Gastrocnemius medialis (tissue), 4 donors: ENCODE measurements at regions of chr6 and their contacts with region 1.

Region 1: GRCh38 chr6:18122124-18123093 is at the start of gene NHLRC1:
- DNase-seq: peak; percentile 85 to 90
- ATAC-seq: peak; percentile 97 to 98
- H3K4me3 ChIP-seq: peak within 1 kb of the TSS; percentile 62 to 97 (median 68)
- H3K27ac ChIP-seq: peak within 1 kb of the TSS; percentile 79 to 89 (median 86)
- H3K4me1 ChIP-seq: peaks cover 12 to 20% of the 10 kb centered on the region in 2 donors
- H3K27me3 ChIP-seq: no peaks in the 10 kb centered on the region
- CTCF ChIP-seq: peak; percentile 97 to 99 (median 98)
- POLR2A ChIP-seq: peak; percentile 68
- total RNA-seq, gene NHLRC1: 0.56 to 1.9 (median 1.4) TPM

Region 2: DNA sequence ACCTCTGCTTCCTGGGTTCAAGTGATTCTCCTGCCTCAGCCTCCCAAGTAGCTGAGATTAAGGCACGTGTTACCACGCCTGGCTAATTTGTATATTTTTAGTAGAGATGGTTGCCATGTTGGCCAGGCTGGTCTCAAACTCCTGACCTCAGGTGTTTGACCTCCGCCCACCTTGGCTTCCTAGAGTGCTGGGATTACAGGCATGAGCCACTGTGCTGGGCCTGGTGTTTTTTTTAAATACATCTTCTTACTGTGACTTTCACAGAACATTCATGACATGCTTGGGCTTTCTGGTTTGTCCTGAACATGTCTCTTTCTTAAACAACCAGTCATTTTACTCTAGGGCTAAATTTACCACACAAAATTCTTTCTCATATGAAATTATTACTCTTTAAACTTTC is 557.0 kb before region 1 on chr6:
- in situ Hi-C with region 1: no loop called
- intact Hi-C with region 1: no loop called
- DNase-seq: no peak
- ATAC-seq: no peak
- H3K4me3 ChIP-seq: no peak overlapping the region
- H3K27ac ChIP-seq: no peak overlapping the region
- H3K4me1 ChIP-seq: no peaks in the 10 kb centered on the region
- H3K27me3 ChIP-seq: no peaks in the 10 kb centered on the region
- CTCF ChIP-seq: no peak
- POLR2A ChIP-seq: no peak

Region 3: GRCh38 chr6:17584241-17584803 is 538.1 kb before region 1 on chr6:
- in situ Hi-C with region 1: no loop called
- intact Hi-C with region 1: loop called (anchors 5 kb)
- DNase-seq: peak in 1 of 2 donors; percentile 33
- ATAC-seq: peak; percentile 92 to 93
- H3K4me3 ChIP-seq: peak overlapping the region; percentile 2 to 48 (median 32)
- H3K27ac ChIP-seq: peak overlapping the region; percentile 66 to 85 (median 75)
- H3K4me1 ChIP-seq: peaks cover 7 to 8% of the 10 kb centered on the region in 2 donors
- H3K27me3 ChIP-seq: no peaks in the 10 kb centered on the region
- CTCF ChIP-seq: peak; percentile 78 to 97 (median 86)
- POLR2A ChIP-seq: no peak

Region 4: GRCh38 chr6:17831135-17831534 is 291.3 kb before region 1 on chr6:
- in situ Hi-C with region 1: loop called (anchors 10 to 25 kb)
- intact Hi-C with region 1: loop called (anchors 2 kb)
- DNase-seq: no peak
- ATAC-seq: peak; percentile 63 to 72
- H3K4me3 ChIP-seq: no peak overlapping the region
- H3K27ac ChIP-seq: peak overlapping the region in 3 of 4 donors; percentile 14 to 47 (median 15)
- H3K4me1 ChIP-seq: no peaks in the 10 kb centered on the region
- H3K27me3 ChIP-seq: no peaks in the 10 kb centered on the region
- CTCF ChIP-seq: no peak
- POLR2A ChIP-seq: no peak

Region 5: GRCh38 chr6:17845598-17845997 is 276.8 kb before region 1 on chr6:
- in situ Hi-C with region 1: loop called in 1 of 4 experiments (anchors 25 kb)
- intact Hi-C with region 1: loop called (anchors 5 kb)
- DNase-seq: no peak
- ATAC-seq: peak; percentile 30 to 58
- H3K4me3 ChIP-seq: no peak overlapping the region
- H3K27ac ChIP-seq: peak overlapping the region in 2 of 4 donors; percentile 1 to 41
- H3K4me1 ChIP-seq: no peaks in the 10 kb centered on the region
- H3K27me3 ChIP-seq: no peaks in the 10 kb centered on the region
- CTCF ChIP-seq: peak in 2 of 5 experiments; percentile 6 to 28
- POLR2A ChIP-seq: no peak

Region 6: GRCh38 chr6:17865798-17866725 is 256.3 kb before region 1 on chr6:
- in situ Hi-C with region 1: no loop called
- intact Hi-C with region 1: loop called (anchors 1 kb)
- DNase-seq: peak; percentile 85 to 93
- ATAC-seq: peak; percentile 98
- H3K4me3 ChIP-seq: no peak overlapping the region
- H3K27ac ChIP-seq: peak overlapping the region; percentile 81 to 88 (median 86)
- H3K4me1 ChIP-seq: peaks cover 46 to 68% of the 10 kb centered on the region in 2 donors
- H3K27me3 ChIP-seq: no peaks in the 10 kb centered on the region
- CTCF ChIP-seq: no peak
- POLR2A ChIP-seq: no peak

Region 7: GRCh38 chr6:17938901-17939300 is 183.5 kb before region 1 on chr6:
- in situ Hi-C with region 1: no loop called
- intact Hi-C with region 1: no loop called
- DNase-seq: no peak
- ATAC-seq: no peak
- H3K4me3 ChIP-seq: no peak overlapping the region
- H3K27ac ChIP-seq: no peak overlapping the region
- H3K4me1 ChIP-seq: peaks cover 37 to 50% of the 10 kb centered on the region in 2 donors
- H3K27me3 ChIP-seq: no peaks in the 10 kb centered on the region
- CTCF ChIP-seq: no peak
- POLR2A ChIP-seq: no peak

Region 8: GRCh38 chr6:18102783-18103509 is 19.5 kb before region 1 on chr6:
- in situ Hi-C with region 1: no loop called
- intact Hi-C with region 1: loop called (anchors 2 kb)
- DNase-seq: peak; percentile 40 to 73
- ATAC-seq: peak; percentile 93 to 98
- H3K4me3 ChIP-seq: peak overlapping the region in 3 of 4 donors; percentile 19 to 36 (median 24)
- H3K27ac ChIP-seq: peak overlapping the region; percentile 58 to 83 (median 74)
- H3K4me1 ChIP-seq: peaks cover 8 to 13% of the 10 kb centered on the region in 2 donors
- H3K27me3 ChIP-seq: no peaks in the 10 kb centered on the region
- CTCF ChIP-seq: no peak
- POLR2A ChIP-seq: no peak